Activated CD4-positive, alpha-beta T cell treated with anti-CD3 and anti-CD28 coated beads, Interleukin-2, amount 10 ng/mL, durations not matched to agents 24 days and 14 days (primary cell): ENCODE measurements at regions of chr3 and their contacts with region 1.

Region 1: DNA sequence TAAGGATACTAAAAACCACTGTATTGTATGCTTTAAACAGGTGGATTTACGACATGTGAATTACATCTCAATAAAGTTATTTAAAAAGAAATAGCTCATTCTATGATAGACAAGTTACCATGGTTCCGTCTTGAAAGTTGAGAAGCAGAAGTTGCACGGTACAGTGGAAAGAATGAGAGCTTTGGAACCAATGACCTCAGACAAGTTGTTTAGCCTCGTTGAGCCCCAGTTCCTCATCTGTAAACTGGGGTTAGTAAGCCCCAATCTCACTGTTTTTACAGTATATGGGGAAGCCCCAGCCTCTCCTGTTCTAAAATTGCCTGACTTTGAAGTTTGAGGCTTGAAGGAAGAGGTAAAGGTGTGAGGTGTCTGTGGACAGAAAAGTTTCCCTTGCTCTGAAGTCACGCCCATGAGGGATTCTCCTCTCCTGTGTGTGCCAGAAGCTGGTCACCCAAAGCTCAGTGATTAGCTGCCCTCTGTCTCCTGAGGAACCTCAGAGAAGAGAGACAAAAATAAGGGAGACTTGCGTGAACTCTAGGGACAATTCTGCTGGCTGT is 10.0 kb downstream of the CRYGS start:
- DNase-seq: peak; percentile 85
- H3K4me3 Mint-ChIP-seq: peak overlapping the region; percentile 78
- H3K27ac Mint-ChIP-seq: peak overlapping the region; percentile 100
- H3K4me1 Mint-ChIP-seq: peaks cover 52% of the 10 kb centered on the region
- H3K27me3 Mint-ChIP-seq: no peaks in the 10 kb centered on the region

Region 2: GRCh38 chr3:185937689-185938463 is 596.3 kb before region 1 on chr3 and contains the start of gene TRA2B:
- intact Hi-C with region 1: loop called (anchors 2 kb)
- DNase-seq: peak; percentile 100
- H3K4me3 Mint-ChIP-seq: peak within 1 kb of the TSS; percentile 98
- H3K27ac Mint-ChIP-seq: peak within 1 kb of the TSS; percentile 100
- H3K4me1 Mint-ChIP-seq: peaks cover 33% of the 10 kb centered on the region
- H3K27me3 Mint-ChIP-seq: peaks cover 4% of the 10 kb centered on the region
- total RNA-seq, gene TRA2B: 311 and 314 TPM in 2 replicates

Region 3: GRCh38 chr3:186152889-186153292 is 381.3 kb before region 1 on chr3:
- intact Hi-C with region 1: loop called (anchors 5 kb)
- DNase-seq: no peak
- H3K4me3 Mint-ChIP-seq: no peak overlapping the region
- H3K27ac Mint-ChIP-seq: no peak overlapping the region
- H3K4me1 Mint-ChIP-seq: peaks cover 15% of the 10 kb centered on the region
- H3K27me3 Mint-ChIP-seq: peaks cover 40% of the 10 kb centered on the region

Region 4: DNA sequence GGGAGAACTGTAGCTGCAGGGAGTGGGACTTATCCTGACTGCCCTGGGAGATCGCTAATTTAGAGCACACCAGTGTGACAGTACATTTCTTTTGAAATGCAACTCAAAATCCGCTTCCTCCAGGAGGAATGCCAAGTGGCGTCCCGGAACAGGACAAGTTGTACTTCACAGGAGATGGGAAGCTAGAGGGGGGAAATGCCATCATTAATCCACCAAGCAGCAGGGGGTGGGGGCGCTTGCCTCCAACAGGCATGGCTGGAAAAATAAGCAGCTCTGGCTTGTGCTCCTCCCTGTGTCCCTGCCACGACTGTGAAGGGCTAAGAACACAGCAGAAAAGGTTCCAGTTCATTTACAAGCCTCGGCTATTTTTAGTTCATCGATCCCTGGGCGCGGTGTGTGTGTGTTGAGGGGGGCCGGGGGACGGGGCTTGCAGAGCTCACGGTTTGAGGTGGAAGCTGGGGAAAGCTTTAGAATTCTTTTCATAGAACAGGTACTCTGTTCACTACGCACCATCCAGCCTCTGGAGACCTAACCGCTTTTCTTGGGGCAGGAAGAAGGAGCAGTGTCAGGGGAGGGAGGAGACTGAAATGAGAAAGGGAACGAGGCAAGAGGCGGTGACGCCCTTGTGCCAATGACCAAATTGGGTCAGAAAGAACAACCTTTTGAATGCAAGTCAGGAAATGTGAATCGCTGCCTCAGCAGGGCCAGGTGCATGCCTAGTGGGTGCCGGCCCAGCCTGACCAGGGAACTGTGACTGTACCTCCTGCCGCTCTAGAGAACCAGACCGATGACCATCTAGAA is 120.4 kb before region 1 on chr3:
- intact Hi-C with region 1: loop called (anchors 2 kb)
- DNase-seq: peak; percentile 66
- H3K4me3 Mint-ChIP-seq: peak overlapping the region; percentile 64
- H3K27ac Mint-ChIP-seq: no peak overlapping the region
- H3K4me1 Mint-ChIP-seq: peaks cover 16% of the 10 kb centered on the region
- H3K27me3 Mint-ChIP-seq: peaks cover 18% of the 10 kb centered on the region

Region 5: GRCh38 chr3:186476044-186476468 is 58.1 kb before region 1 on chr3:
- intact Hi-C with region 1: loop called (anchors 5 kb)
- DNase-seq: no peak
- H3K4me3 Mint-ChIP-seq: no peak overlapping the region
- H3K27ac Mint-ChIP-seq: no peak overlapping the region
- H3K4me1 Mint-ChIP-seq: peaks cover 9% of the 10 kb centered on the region
- H3K27me3 Mint-ChIP-seq: no peaks in the 10 kb centered on the region

Region 6: DNA sequence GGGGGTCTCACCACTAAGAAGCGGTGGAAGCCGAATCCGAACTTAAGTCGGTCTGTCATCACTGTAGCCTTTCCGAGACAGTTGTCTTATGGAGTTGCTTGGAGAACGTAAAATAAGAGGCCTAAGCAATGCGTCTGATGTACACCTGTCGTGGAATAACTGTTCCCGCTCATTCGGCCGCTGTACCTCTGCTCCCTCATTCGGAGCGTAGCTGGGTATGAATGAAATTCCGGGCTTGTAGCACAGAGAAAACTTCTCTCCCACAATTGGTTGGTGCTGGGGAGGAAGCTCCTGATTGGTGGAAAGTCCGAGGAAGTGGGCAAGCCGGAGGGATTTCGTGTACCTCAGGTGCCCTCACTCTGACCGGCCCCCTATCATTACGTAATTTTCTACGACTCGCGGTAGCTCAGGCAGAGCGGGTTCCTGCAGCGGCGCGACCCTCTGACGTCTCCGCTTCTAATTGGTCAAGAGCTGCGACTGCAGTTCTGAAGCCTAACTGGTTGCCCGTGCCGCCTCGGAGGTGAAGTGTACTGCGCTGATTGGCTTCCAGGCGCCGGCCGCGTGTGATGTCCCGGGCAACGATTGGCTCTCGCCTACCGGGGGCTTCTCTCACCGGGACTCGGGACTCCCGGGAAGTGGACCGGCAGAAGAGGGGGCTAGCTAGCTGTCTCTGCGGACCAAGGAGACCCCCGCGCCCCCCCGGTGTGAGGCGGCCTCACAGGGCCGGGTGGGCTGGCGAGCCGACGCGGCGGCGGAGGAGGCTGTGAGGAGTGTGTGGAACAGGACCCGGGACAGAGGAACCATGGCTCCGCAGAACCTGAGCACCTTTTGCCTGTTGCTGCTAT is 36.1 kb after region 1 on chr3 and contains the start of gene DNAJB11:
- intact Hi-C with region 1: loop called (anchors 2 kb)
- DNase-seq: peak; percentile 99
- H3K4me3 Mint-ChIP-seq: peak within 1 kb of the TSS; percentile 90
- H3K27ac Mint-ChIP-seq: peak within 1 kb of the TSS; percentile 99
- H3K4me1 Mint-ChIP-seq: peaks cover 47% of the 10 kb centered on the region
- H3K27me3 Mint-ChIP-seq: no peaks in the 10 kb centered on the region
- total RNA-seq, gene DNAJB11: 74.0 and 77.7 TPM in 2 replicates

Region 7: GRCh38 chr3:187011915-187012314 is 477.7 kb after region 1 on chr3:
- intact Hi-C with region 1: loop called (anchors 1 kb)
- DNase-seq: no peak
- H3K4me3 Mint-ChIP-seq: peak overlapping the region; percentile 24
- H3K27ac Mint-ChIP-seq: peak overlapping the region; percentile 89
- H3K4me1 Mint-ChIP-seq: peaks cover 47% of the 10 kb centered on the region
- H3K27me3 Mint-ChIP-seq: no peaks in the 10 kb centered on the region

Region 8: DNA sequence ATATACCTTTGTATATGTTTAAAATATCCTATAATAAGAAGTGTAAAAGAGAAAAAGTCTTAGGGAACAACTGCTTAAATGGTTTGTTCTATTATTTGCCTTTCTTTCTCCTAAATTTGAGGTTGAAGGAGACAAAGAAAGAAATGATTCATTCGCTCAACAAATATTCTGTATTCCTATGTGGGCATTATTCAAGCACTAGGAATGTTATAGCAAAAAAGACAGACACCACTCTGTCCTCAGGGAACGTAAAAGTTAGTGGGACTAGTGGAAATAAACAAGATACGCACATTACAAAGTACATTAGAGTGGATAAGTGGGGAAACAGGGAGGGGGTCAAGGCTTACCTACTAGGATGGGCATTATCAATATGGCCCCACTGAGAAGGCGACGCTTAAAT is 1951.9 kb after region 1 on chr3:
- intact Hi-C with region 1: no loop called
- DNase-seq: peak; percentile 8
- H3K4me3 Mint-ChIP-seq: no peak overlapping the region
- H3K27ac Mint-ChIP-seq: no peak overlapping the region
- H3K4me1 Mint-ChIP-seq: peaks cover 6% of the 10 kb centered on the region
- H3K27me3 Mint-ChIP-seq: no peaks in the 10 kb centered on the region